ENCODE measurements at regions of chr4 and their contacts with region 1.

Region 1: DNA sequence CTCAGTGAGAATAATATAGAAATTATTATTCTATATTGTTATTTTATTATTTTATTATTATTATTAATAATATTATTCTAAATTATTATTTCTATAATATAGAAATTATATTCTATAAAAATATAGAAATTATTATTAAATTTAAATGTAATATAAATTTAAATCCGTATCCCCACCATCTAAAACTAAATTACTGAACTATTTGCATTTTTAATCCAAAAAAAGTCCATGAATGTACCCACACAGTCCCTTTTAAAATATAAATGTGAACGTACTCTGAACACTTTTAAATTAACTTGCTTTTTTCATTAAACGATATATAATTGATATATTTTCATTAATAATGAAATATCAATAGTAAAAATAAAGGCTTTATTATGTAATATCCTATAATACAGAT is 248.3 kb upstream of the PCDH7 start:
- DNase-seq: no peak
- H3K4me3 Mint-ChIP-seq: no peak overlapping the region
- H3K27ac Mint-ChIP-seq: no peak overlapping the region
- H3K4me1 Mint-ChIP-seq: no peaks in the 10 kb centered on the region
- H3K27me3 Mint-ChIP-seq: no peaks in the 10 kb centered on the region

Region 2: DNA sequence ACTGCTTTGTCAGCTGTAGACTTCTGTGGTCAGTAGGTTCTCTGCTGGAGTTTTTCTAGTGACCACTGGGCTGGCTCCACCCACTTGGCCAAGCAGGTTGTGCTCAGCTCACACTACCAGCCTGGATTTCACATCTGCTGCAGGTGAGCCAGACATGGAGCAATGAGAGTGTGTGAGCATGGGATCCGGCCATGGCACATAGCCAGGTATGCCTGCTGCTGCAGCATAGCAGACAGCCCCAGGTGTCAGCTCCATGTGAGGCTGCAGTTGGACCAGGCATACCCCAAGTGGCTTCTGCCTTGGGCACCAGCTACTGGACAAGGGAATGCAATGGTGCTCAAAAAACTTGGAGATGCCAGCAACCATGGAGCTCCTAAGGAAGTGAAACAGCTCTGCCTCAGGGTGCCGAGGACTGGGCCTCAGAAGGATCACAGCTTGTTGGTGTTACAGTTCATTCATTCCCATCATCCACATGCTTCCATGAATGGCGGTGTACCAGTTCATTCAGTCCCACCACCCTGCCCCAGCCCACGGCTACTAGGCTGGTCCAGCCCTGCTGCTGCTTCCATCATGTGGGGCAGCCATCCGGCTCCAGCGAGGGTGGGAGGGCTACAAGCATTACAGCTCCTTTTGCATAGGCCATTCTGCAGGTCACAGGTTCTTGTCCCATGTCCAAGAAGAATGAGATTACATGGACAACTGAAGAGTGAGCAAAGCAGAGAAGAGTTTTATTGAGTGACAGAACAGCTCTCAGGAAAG is 140.8 kb before region 1 on chr4:
- intact Hi-C with region 1: no loop called
- DNase-seq: no peak
- H3K4me3 Mint-ChIP-seq: no peak overlapping the region
- H3K27ac Mint-ChIP-seq: no peak overlapping the region
- H3K4me1 Mint-ChIP-seq: no peaks in the 10 kb centered on the region
- H3K27me3 Mint-ChIP-seq: no peaks in the 10 kb centered on the region

Region 3: GRCh38 chr4:30518211-30518610 is 46.4 kb after region 1 on chr4:
- intact Hi-C with region 1: loop called (anchors 1 kb)
- DNase-seq: no peak
- H3K4me3 Mint-ChIP-seq: no peak overlapping the region
- H3K27ac Mint-ChIP-seq: no peak overlapping the region
- H3K4me1 Mint-ChIP-seq: no peaks in the 10 kb centered on the region
- H3K27me3 Mint-ChIP-seq: no peaks in the 10 kb centered on the region

Measured in activated T-helper 2 cell treated with anti-CD3 and anti-CD28 coated beads, Interferon-gamma antibody, Interleukin-2, Interleukin-4, amounts not matched to agents 10 μg/mL and 5 μg/mL and 100 μg/mL, durations not matched to agents 14 hours and 24 hours and 36 hours (primary cell).